ENCODE measurements at regions of chr4 and their contacts with region 1.

Region 1: GRCh38 chr4:33184657-33185290 is 2464.6 kb downstream of the PCDH7 start:
- DNase-seq: no peak
- H3K4me3 ChIP-seq: no peak overlapping the region
- H3K27ac ChIP-seq: no peak overlapping the region
- H3K4me1 ChIP-seq: no peaks in the 10 kb centered on the region
- H3K27me3 ChIP-seq: no peaks in the 10 kb centered on the region
- CTCF ChIP-seq: no peak

Region 2: GRCh38 chr4:33111117-33111516 is 73.7 kb before region 1 on chr4:
- CTCF ChIA-PET with region 1: no interaction called
- POLR2A ChIA-PET with region 1: no interaction called
- intact Hi-C with region 1: loop called (anchors 2 kb)
- DNase-seq: no peak
- H3K4me3 ChIP-seq: no peak overlapping the region
- H3K27ac ChIP-seq: no peak overlapping the region
- H3K4me1 ChIP-seq: no peaks in the 10 kb centered on the region
- H3K27me3 ChIP-seq: no peaks in the 10 kb centered on the region
- CTCF ChIP-seq: no peak